ENCODE measurements at regions of chr15 and their contacts with region 1.

Region 1: GRCh38 chr15:56295433-56295832 is 51.8 kb upstream of the RFX7 start:
- DNase-seq: peak; percentile 14
- H3K4me3 ChIP-seq: no peak overlapping the region
- H3K27ac ChIP-seq: no peak overlapping the region
- H3K4me1 ChIP-seq: no peaks in the 10 kb centered on the region
- H3K27me3 ChIP-seq: peaks cover 1% of the 10 kb centered on the region
- CTCF ChIP-seq: peak; percentile 31 to 49

Region 2: GRCh38 chr15:56261854-56262509 is 33.5 kb before region 1 on chr15:
- CTCF ChIA-PET with region 1: interaction called, 10 read pairs
- dilution Hi-C with region 1: no loop called
- in situ Hi-C with region 1: no loop called
- intact Hi-C with region 1: no loop called
- DNase-seq: peak; percentile 74
- H3K4me3 ChIP-seq: no peak overlapping the region
- H3K27ac ChIP-seq: peak overlapping the region; percentile 12
- H3K4me1 ChIP-seq: no peaks in the 10 kb centered on the region
- H3K27me3 ChIP-seq: no peaks in the 10 kb centered on the region
- CTCF ChIP-seq: no peak

Region 3: GRCh38 chr15:56365075-56365711 is 69.8 kb after region 1 on chr15 and contains the start of gene TEX9:
- CTCF ChIA-PET with region 1: no interaction called
- dilution Hi-C with region 1: no loop called
- in situ Hi-C with region 1: no loop called
- intact Hi-C with region 1: loop called (anchors 10 kb)
- DNase-seq: peak; percentile 82
- H3K4me3 ChIP-seq: peak within 1 kb of the TSS; percentile 53 to 70 (median 69)
- H3K27ac ChIP-seq: peak within 1 kb of the TSS; percentile 31
- H3K4me1 ChIP-seq: peaks cover 16% of the 10 kb centered on the region
- H3K27me3 ChIP-seq: no peaks in the 10 kb centered on the region
- CTCF ChIP-seq: no peak
- total RNA-seq, gene TEX9: 7.7 to 11.2 TPM

Region 4: DNA sequence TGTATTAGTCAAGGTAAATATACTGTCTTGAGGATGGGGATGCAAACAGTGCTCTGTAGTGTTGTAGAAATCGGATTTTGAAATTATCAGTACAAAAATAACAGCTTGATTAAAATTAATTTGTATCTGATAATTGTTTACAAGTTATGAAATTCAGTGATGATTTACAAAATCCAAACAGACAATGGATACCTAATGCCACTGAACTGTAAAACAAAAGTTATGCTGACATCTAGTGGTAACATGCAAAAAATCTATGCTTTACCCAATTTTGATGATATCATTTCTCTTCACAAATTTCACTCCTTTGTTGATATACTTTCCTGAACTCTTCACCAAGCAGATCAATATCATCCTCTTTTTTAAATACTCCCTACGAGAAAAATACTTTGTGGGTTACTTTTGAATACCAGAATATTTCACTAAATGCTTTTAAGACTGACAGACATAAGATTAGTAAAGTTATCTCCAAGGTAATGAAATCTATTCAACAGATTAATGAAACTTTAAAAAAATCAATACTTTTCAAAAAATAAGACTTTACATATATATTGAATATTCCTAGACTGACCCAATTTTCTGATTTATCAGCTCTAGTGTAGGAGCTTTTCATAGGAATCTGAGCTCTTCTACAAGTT is 133.5 kb after region 1 on chr15:
- CTCF ChIA-PET with region 1: no interaction called
- dilution Hi-C with region 1: no loop called
- in situ Hi-C with region 1: no loop called
- intact Hi-C with region 1: loop called (anchors 1 kb)
- DNase-seq: peak; percentile 20
- H3K4me3 ChIP-seq: no peak overlapping the region
- H3K27ac ChIP-seq: no peak overlapping the region
- H3K4me1 ChIP-seq: no peaks in the 10 kb centered on the region
- H3K27me3 ChIP-seq: no peaks in the 10 kb centered on the region
- CTCF ChIP-seq: peak; percentile 52 to 59

Measured in mammary epithelial cell (primary cell).